ENCODE measurements at regions of chr20 and their contacts with region 1.

Region 1: DNA sequence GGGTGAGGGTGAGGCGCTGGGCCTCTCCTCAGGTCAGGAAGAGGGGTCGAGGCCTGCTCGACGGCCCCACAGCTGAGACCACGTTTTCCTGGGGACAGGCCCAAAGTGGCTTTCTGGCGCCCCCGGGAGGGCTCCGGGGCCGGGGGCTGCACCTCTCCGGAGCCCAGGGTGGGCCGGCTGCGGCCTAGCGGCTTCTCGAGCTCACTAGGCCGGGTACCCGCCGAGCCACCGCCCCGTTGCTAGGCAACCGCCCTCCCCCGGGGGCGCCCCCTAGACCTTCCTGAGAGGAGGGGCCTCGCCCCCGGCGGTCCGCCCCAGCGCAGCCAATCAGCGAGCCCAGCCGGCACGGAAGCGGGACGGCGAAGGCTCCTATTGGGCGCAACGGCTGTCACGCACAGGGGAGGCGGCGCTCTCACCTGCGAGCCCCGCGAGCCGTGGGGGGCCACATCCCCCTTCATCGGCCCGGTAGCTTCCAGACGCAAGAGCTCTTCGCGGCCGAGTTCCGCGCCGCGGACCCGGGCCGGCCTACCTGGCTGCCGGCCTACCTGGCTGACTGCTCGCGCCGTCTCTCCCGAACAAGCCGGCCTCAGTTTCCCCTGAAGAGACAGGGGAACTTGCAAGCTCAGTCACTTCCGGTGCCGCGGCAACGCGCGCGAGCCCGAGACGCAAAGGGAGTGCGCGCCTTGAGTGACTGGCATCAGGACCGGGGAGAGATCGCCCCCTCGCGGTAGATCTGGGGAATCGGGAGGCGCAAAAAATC is 831 bp upstream of the BCL2L1 start:
- DNase-seq: peak; percentile 96 to 99 (median 98)
- ATAC-seq: peak; percentile 93
- H3K4me3 ChIP-seq: peak overlapping the region; percentile 64 to 85
- H3K4me3 Mint-ChIP-seq: peak overlapping the region; percentile 86
- H3K27ac ChIP-seq: peak overlapping the region; percentile 91 to 94
- H3K27ac Mint-ChIP-seq: peak overlapping the region; percentile 94
- H3K4me1 ChIP-seq: peaks cover 38% of the 10 kb centered on the region
- H3K4me1 Mint-ChIP-seq: peaks cover 43% of the 10 kb centered on the region
- H3K27me3 ChIP-seq: no peaks in the 10 kb centered on the region
- H3K27me3 Mint-ChIP-seq: no peaks in the 10 kb centered on the region
- CTCF ChIP-seq: no peak

Region 2: GRCh38 chr20:31572701-31573554 is 150.6 kb before region 1 on chr20:
- CTCF ChIA-PET with region 1: interaction called, 7 read pairs
- POLR2A ChIA-PET with region 1: interaction called, 4 read pairs
- intact Hi-C with region 1: loop called (anchors 1 to 2 kb)
- DNase-seq: peak; percentile 75 to 93 (median 85)
- ATAC-seq: peak; percentile 91
- H3K4me3 ChIP-seq: peak overlapping the region; percentile 75 to 79
- H3K4me3 Mint-ChIP-seq: peak overlapping the region; percentile 87
- H3K27ac ChIP-seq: peak overlapping the region; percentile 51 to 78
- H3K27ac Mint-ChIP-seq: peak overlapping the region; percentile 84
- H3K4me1 ChIP-seq: peaks cover 16% of the 10 kb centered on the region
- H3K4me1 Mint-ChIP-seq: peaks cover 26% of the 10 kb centered on the region
- H3K27me3 ChIP-seq: no peaks in the 10 kb centered on the region
- H3K27me3 Mint-ChIP-seq: no peaks in the 10 kb centered on the region
- CTCF ChIP-seq: no peak

Region 3: DNA sequence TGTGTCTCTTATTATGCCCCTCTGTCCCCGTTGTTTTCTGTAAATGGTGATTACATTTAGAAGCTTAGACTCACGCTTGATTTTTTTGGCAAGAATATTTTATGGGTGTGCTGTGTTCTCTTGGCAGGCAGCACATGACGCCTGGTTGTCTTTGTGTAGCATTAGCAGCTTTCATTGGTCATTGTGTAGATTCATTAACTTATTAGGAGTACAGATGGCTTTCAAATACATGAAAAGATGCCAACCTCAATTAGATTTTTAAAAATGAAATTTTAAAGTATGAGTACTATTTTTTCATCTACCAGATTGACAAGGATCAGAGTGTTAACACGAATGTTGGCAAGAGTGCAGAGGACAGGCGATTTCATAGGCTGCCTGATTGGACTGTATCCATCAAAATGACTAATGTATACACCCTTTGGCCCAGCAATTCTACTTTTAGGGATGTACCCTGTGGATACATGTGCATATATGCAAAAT is 70.5 kb before region 1 on chr20:
- CTCF ChIA-PET with region 1: interaction called, 20 read pairs
- POLR2A ChIA-PET with region 1: no interaction called
- intact Hi-C with region 1: no loop called
- DNase-seq: no peak
- ATAC-seq: no peak
- H3K4me3 ChIP-seq: no peak overlapping the region
- H3K4me3 Mint-ChIP-seq: no peak overlapping the region
- H3K27ac ChIP-seq: no peak overlapping the region
- H3K27ac Mint-ChIP-seq: no peak overlapping the region
- H3K4me1 ChIP-seq: no peaks in the 10 kb centered on the region
- H3K4me1 Mint-ChIP-seq: no peaks in the 10 kb centered on the region
- H3K27me3 ChIP-seq: no peaks in the 10 kb centered on the region
- H3K27me3 Mint-ChIP-seq: no peaks in the 10 kb centered on the region
- CTCF ChIP-seq: no peak

Region 4: GRCh38 chr20:31684153-31685015 is 39.1 kb before region 1 on chr20:
- CTCF ChIA-PET with region 1: interaction called, 36 read pairs
- POLR2A ChIA-PET with region 1: interaction called, 3 read pairs
- intact Hi-C with region 1: no loop called
- DNase-seq: peak in 3 of 9 experiments; percentile 16 to 59 (median 53)
- ATAC-seq: peak; percentile 81
- H3K4me3 ChIP-seq: no peak overlapping the region
- H3K4me3 Mint-ChIP-seq: peak overlapping the region; percentile 43
- H3K27ac ChIP-seq: peak overlapping the region in 1 of 2 experiments; percentile 57
- H3K27ac Mint-ChIP-seq: peak overlapping the region; percentile 81
- H3K4me1 ChIP-seq: peaks cover 38% of the 10 kb centered on the region
- H3K4me1 Mint-ChIP-seq: peaks cover 73% of the 10 kb centered on the region
- H3K27me3 ChIP-seq: no peaks in the 10 kb centered on the region
- H3K27me3 Mint-ChIP-seq: no peaks in the 10 kb centered on the region
- CTCF ChIP-seq: no peak

Region 5: GRCh38 chr20:31738729-31739561 is 15.4 kb after region 1 on chr20 and contains the start of gene TPX2:
- CTCF ChIA-PET with region 1: interaction called, 10 read pairs
- POLR2A ChIA-PET with region 1: interaction called, 3 read pairs
- intact Hi-C with region 1: loop called in 1 of 2 experiments (anchors 1 kb)
- DNase-seq: peak; percentile 33 to 91 (median 78)
- ATAC-seq: peak; percentile 88
- H3K4me3 ChIP-seq: peak within 1 kb of the TSS; percentile 74 to 80
- H3K4me3 Mint-ChIP-seq: no peak within 1 kb of the TSS
- H3K27ac ChIP-seq: no peak within 1 kb of the TSS
- H3K27ac Mint-ChIP-seq: no peak within 1 kb of the TSS
- H3K4me1 ChIP-seq: peaks cover 15% of the 10 kb centered on the region
- H3K4me1 Mint-ChIP-seq: no peaks in the 10 kb centered on the region
- H3K27me3 ChIP-seq: no peaks in the 10 kb centered on the region
- H3K27me3 Mint-ChIP-seq: no peaks in the 10 kb centered on the region
- CTCF ChIP-seq: no peak
- total RNA-seq, gene TPX2: 0.62 to 0.75 TPM

Measured in CD8-positive, alpha-beta T cell (primary cell).